Endothelial cell of umbilical vein (primary cell): ENCODE measurements at regions of chr10 and their contacts with region 1.

Region 1: GRCh38 chr10:12186323-12186722 is 9.4 kb downstream of the NUDT5 start:
- DNase-seq: peak; percentile 46
- H3K4me3 ChIP-seq: no peak overlapping the region
- H3K27ac ChIP-seq: peak overlapping the region; percentile 46
- H3K4me1 ChIP-seq: peaks cover 15% of the 10 kb centered on the region
- H3K27me3 ChIP-seq: no peaks in the 10 kb centered on the region
- CTCF ChIP-seq: no peak
- POLR2A ChIP-seq: no peak

Region 2: DNA sequence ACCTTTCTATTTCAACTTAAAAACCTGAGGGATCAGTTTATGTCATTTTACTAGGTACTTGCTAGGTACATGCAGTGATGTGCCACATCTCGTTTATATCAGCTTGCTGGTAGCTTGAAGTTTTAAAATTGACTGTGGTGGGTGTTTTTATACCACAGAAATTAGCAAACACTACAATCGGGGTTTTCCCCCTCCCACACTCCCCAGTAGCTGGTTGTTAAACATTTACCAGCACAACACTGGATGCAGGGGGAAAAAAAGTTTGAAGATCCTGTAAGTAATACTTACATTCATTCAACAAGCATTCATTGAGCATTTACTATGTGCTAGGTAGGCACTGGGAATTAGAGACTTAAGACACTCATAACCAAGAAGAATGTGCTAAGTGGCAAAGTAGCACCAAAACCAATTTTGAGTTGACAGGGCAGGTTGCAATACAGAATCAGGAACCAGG is 607.5 kb before region 1 on chr10:
- CTCF ChIA-PET with region 1: no interaction called
- POLR2A ChIA-PET with region 1: no interaction called
- dilution Hi-C with region 1: no loop called
- intact Hi-C with region 1: no loop called
- DNase-seq: no peak
- H3K4me3 ChIP-seq: no peak overlapping the region
- H3K27ac ChIP-seq: no peak overlapping the region
- H3K4me1 ChIP-seq: no peaks in the 10 kb centered on the region
- H3K27me3 ChIP-seq: no peaks in the 10 kb centered on the region
- CTCF ChIP-seq: no peak
- POLR2A ChIP-seq: no peak

Region 3: DNA sequence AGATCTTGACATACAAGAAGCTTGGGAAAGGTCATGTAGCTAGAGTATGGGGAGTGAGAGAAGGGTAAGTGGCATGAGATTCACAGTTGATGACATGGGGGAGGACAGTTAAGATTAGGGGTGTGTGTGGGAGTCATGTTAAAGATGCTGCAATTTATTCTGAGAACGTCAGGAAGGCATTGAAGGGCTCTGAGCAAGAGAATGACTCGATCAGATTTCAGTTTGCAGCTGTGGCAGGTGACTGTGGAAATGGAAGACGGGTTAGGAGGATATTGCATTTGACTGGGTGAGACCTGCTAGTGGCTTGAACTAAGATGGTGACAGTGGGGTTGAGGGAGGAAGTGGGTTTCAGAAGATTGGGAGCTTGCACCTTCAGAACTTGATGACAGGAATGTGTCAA is 15.2 kb after region 1 on chr10:
- CTCF ChIA-PET with region 1: no interaction called
- POLR2A ChIA-PET with region 1: no interaction called
- dilution Hi-C with region 1: no loop called
- intact Hi-C with region 1: no loop called
- DNase-seq: no peak
- H3K4me3 ChIP-seq: no peak overlapping the region
- H3K27ac ChIP-seq: no peak overlapping the region
- H3K4me1 ChIP-seq: peaks cover 4% of the 10 kb centered on the region
- H3K27me3 ChIP-seq: no peaks in the 10 kb centered on the region
- CTCF ChIP-seq: no peak
- POLR2A ChIP-seq: no peak

Region 4: GRCh38 chr10:12221323-12222298 is 35.3 kb after region 1 on chr10:
- CTCF ChIA-PET with region 1: no interaction called
- POLR2A ChIA-PET with region 1: no interaction called
- dilution Hi-C with region 1: no loop called
- intact Hi-C with region 1: loop called (anchors 1 kb)
- DNase-seq: no peak
- H3K4me3 ChIP-seq: no peak overlapping the region
- H3K27ac ChIP-seq: peak overlapping the region; percentile 32
- H3K4me1 ChIP-seq: no peaks in the 10 kb centered on the region
- H3K27me3 ChIP-seq: no peaks in the 10 kb centered on the region
- CTCF ChIP-seq: no peak
- POLR2A ChIP-seq: no peak